ENCODE measurements at regions of chr1 and their contacts with region 1.

Region 1: DNA sequence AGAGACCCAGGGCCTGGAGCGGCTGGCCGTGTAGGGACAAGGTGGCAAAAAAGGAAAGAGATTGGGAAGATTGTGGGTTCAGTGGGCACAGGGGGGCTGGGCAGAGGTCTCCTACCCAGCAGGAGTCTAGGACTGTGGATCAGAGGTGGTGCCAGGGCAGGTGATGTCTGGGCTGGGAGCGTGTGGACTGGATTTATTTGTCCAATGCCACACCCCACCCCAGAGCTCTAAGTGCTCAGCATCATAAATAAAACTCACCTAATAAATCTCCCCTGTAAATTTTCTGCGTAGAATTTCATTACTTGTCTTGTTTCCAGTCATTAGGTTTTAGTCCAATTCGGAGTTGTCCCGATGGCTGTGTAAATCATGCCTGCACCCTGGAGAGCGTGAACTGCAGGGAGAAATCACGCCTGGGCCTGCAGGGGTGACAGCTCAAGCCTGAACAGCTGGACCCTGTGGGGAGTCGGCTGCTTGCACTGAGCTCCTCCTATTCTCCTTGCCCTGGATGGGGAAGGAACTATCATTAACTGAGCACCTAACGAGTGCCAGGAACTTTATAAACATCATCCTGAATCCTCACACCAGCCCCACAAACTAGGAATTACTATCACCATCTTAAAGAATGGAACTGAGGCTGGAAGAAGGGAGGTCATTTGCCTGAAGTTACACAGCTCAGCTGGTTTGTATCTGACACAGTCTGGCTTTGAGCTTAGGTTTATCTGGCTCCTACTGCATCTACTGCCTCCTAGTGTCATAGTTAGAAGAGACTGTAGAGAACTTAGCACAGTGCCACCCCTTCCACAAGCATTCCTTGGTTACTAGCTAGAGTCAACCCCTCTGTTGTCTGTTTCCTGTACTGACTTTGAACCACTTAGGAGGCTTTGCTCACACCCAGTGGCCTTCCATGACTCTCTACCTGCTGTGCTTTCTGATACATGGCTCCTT is 25.0 kb upstream of the POU3F1 start:
- DNase-seq: peak; percentile 66
- CTCF ChIP-seq: peak; percentile 40

Region 2: DNA sequence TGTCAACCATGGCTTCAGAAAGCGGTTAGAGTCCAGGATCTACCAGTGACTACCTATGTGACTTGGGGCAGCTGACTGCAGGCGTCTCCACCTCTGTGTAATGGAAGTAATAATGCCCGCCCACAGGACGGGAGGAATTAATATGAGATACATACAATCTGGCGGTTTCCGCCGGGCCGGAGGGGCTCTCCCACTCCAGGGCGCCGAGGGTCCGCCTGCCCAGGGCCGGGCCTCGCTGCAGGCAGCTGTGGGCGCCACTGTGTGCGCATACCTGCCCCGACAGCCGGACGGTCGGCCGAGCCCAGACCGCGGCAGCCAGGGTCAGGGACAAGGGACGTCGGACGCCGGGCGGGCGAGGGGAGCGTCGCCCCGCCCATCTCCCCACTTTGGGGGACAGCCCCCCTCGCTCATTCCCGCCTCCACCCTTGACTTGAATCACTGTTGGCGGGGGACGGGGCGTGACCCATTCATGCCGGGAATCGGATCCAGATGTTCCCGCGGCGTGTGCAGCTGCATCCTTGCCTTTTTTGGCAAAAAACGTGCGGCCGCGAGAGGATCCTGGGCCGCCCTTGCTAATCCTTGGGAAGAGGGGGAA is 75.7 kb before region 1 on chr1:
- CTCF ChIA-PET with region 1: no interaction called
- POLR2A ChIA-PET with region 1: no interaction called
- DNase-seq: no peak
- CTCF ChIP-seq: no peak

Region 3: DNA sequence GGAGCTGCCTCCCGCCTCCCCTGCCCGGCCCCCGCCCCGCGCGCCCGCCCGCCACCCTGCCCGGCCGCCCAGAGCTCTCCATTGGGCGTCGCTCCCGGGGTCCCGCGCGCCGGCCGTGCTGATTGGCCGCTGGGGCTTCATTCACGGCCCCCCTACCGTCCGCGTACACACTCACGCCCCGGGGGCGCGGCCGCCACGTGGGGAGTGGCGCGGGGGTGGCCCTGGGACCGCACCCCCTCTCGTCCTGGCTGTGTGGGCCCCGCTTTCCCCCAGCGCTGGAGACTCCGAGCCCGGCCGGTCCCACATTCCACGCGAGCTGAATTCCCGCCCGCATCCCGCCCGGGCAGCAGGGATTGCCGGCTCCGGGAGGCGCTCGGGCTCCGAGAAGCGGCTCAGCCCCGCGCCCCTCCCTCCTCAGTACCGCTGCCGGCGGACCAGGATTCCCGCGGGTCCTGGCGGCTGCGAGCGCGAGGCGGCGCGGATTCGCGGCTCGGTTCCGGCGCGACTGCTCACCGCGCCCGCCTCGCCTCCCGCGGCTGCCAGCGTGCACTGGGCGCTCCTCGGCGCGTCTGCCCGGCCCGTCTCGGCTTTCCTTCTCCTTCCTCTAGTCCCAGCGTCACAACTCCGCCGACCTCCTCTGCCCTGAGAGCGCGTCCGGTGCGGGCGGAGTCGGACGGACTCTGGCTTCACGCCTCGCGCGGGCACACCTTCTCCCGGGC is 24.5 kb before region 1 on chr1:
- CTCF ChIA-PET with region 1: interaction called, 10 read pairs
- POLR2A ChIA-PET with region 1: no interaction called
- DNase-seq: peak; percentile 89
- CTCF ChIP-seq: no peak

Region 4: GRCh38 chr1:38052750-38053410 is 18.7 kb before region 1 on chr1:
- CTCF ChIA-PET with region 1: interaction called, 68 read pairs
- POLR2A ChIA-PET with region 1: no interaction called
- DNase-seq: peak; percentile 52
- CTCF ChIP-seq: no peak

Region 5: GRCh38 chr1:38084700-38085099 is 13.1 kb after region 1 on chr1:
- CTCF ChIA-PET with region 1: interaction called, 40 read pairs
- POLR2A ChIA-PET with region 1: no interaction called
- DNase-seq: no peak
- CTCF ChIP-seq: no peak